ENCODE measurements at regions of chr10 and their contacts with region 1.

Region 1: GRCh38 chr10:80535671-80536365 is 1.9 kb upstream of the SH2D4B start:
- DNase-seq: peak; percentile 45 to 90 (median 75)
- ATAC-seq: peak; percentile 85
- H3K4me3 ChIP-seq: peak overlapping the region; percentile 62 to 72
- H3K4me3 Mint-ChIP-seq: peak overlapping the region; percentile 84
- H3K27ac ChIP-seq: peak overlapping the region; percentile 85 to 91
- H3K27ac Mint-ChIP-seq: peak overlapping the region; percentile 98
- H3K4me1 ChIP-seq: peaks cover 21% of the 10 kb centered on the region
- H3K4me1 Mint-ChIP-seq: peaks cover 36% of the 10 kb centered on the region
- H3K27me3 ChIP-seq: no peaks in the 10 kb centered on the region
- H3K27me3 Mint-ChIP-seq: no peaks in the 10 kb centered on the region
- CTCF ChIP-seq: peak; percentile 70

Region 2: GRCh38 chr10:80580638-80581468 is 45.0 kb after region 1 on chr10:
- CTCF ChIA-PET with region 1: interaction called, 3 read pairs
- POLR2A ChIA-PET with region 1: no interaction called
- intact Hi-C with region 1: loop called in 1 of 2 experiments (anchors 5 kb)
- DNase-seq: no peak
- ATAC-seq: no peak
- H3K4me3 ChIP-seq: no peak overlapping the region
- H3K4me3 Mint-ChIP-seq: no peak overlapping the region
- H3K27ac ChIP-seq: no peak overlapping the region
- H3K27ac Mint-ChIP-seq: no peak overlapping the region
- H3K4me1 ChIP-seq: no peaks in the 10 kb centered on the region
- H3K4me1 Mint-ChIP-seq: no peaks in the 10 kb centered on the region
- H3K27me3 ChIP-seq: no peaks in the 10 kb centered on the region
- H3K27me3 Mint-ChIP-seq: peaks cover 9% of the 10 kb centered on the region
- CTCF ChIP-seq: no peak

Region 3: GRCh38 chr10:80924063-80924952 is 388.5 kb after region 1 on chr10:
- CTCF ChIA-PET with region 1: no interaction called
- POLR2A ChIA-PET with region 1: no interaction called
- intact Hi-C with region 1: loop called in 1 of 2 experiments (anchors 5 kb)
- DNase-seq: peak in 2 of 9 experiments; percentile 10 to 29
- ATAC-seq: no peak
- H3K4me3 ChIP-seq: no peak overlapping the region
- H3K4me3 Mint-ChIP-seq: no peak overlapping the region
- H3K27ac ChIP-seq: no peak overlapping the region
- H3K27ac Mint-ChIP-seq: no peak overlapping the region
- H3K4me1 ChIP-seq: no peaks in the 10 kb centered on the region
- H3K4me1 Mint-ChIP-seq: no peaks in the 10 kb centered on the region
- H3K27me3 ChIP-seq: no peaks in the 10 kb centered on the region
- H3K27me3 Mint-ChIP-seq: peaks cover 10% of the 10 kb centered on the region
- CTCF ChIP-seq: no peak